Psoas muscle (tissue), 8 donors: ENCODE measurements at regions of chr11 and their contacts with region 1.

Region 1: DNA sequence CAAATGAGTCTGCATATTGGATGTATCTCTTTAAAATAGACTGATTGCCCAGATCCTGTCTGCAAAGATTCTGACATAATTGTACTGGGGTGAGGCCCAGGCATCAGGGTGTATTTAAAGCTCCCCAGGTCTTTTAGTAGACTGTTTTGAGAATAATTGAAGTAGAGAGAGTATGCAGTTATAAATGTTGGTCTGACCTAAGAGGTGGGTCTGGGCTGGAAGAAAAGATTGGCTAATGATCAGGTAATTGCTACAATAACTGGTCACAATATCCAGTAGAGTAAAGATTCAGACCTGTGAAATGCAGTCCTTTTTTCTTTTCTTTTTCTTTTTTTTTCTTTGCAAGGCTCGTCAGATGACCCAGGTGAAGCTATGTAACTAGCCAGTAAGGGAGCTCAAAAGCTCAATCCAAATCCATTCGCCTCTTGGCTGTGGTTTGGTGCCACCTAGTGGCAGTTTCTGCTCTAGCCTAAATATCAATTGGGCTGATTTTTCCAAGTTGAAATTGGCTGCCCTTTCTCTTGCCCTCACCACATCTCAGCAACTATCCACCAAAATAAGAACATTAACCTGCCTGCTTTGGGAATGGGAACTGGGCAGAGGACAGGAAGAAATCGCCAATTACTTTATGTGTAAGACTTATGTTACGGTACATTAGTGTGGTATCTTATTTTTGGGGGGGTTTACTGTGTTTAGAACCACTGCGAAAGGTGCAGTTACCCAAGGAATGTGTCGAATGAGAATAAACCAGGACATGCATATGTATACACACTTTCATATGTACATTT is 45.9 kb downstream of the ZNF143 start:
- DNase-seq: peak; percentile 56 to 71
- ATAC-seq: peak; percentile 75 to 90 (median 86)
- H3K4me3 ChIP-seq: no peak overlapping the region
- H3K27ac ChIP-seq: no peak overlapping the region
- H3K4me1 ChIP-seq: no peaks in the 10 kb centered on the region
- H3K27me3 ChIP-seq: no peaks in the 10 kb centered on the region
- CTCF ChIP-seq: peak; percentile 93

Region 2: GRCh38 chr11:9015677-9016076 is 491.0 kb before region 1 on chr11:
- intact Hi-C with region 1: loop called (anchors 2 to 10 kb)
- DNase-seq: peak; percentile 52 to 66
- ATAC-seq: peak; percentile 83 to 96 (median 92)
- H3K4me3 ChIP-seq: no peak overlapping the region
- H3K27ac ChIP-seq: no peak overlapping the region
- H3K4me1 ChIP-seq: no peaks in the 10 kb centered on the region
- H3K27me3 ChIP-seq: no peaks in the 10 kb centered on the region
- CTCF ChIP-seq: peak; percentile 75

Region 3: DNA sequence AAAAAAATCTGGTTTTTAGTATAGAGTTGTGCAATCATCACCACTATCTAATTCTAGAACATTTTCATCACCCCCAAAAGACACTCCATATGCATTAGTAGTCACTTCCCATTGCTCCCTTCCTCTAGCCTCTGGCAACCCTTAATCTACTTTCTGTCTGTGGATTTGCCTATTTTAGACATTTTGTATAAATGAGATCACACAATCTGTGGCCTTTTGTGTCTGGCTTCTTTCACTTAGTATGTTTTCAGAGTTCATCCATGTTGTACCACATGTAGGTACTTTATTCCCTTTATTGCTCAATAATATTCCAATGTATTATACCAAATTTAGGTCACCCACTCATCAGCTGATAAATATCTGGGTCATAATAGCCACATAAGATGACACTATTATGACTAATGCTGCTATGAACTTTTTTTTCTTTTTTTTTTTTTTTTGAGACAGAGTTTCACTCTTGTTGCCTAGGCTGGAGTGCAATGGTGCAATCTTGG is 347.7 kb before region 1 on chr11:
- intact Hi-C with region 1: loop called in 1 of 2 experiments (anchors 10 kb)
- DNase-seq: no peak
- ATAC-seq: peak; percentile 60 to 73 (median 66)
- H3K4me3 ChIP-seq: no peak overlapping the region
- H3K27ac ChIP-seq: no peak overlapping the region
- H3K4me1 ChIP-seq: no peaks in the 10 kb centered on the region
- H3K27me3 ChIP-seq: no peaks in the 10 kb centered on the region
- CTCF ChIP-seq: no peak

Region 4: DNA sequence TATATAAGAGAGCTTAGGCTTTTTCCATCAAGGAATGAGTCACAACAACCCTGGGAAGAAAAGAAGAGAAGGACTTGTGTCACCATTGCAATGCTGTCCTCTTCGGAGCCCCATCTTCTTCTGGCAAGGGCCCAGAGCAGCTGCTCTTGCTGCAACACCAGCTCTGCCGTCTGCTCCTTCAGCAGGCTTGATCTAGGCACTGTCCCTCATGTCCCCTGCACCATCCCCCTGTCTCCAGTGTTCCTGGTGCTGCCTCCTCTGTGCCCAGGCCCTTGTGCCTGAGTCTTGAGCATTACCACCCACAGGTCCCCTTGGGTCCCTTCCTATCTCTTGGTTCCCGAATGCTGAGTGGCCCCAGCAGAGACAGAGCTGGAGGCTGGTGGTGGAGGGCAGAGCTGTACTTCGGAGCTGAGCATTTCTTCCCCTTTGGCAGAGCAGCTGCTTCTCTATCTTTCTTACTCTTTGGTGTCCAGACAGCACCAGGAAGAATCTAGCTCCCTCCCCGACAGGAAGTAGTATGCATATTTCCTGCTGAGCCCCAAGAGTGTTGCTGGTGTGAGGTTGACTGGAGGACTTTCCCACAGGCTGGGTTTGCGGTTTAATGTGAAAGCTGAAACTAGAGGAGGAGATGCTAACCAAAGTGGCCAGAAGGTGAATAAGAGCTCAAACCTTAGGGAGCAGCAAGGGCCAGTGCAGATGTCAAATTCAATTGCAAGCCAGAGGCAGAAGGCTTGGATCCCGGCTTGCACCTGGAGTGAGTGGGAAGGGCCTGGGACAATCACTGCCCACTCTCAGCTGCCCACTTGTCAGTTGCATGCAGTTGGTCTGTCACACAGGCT is 94.6 kb after region 1 on chr11:
- intact Hi-C with region 1: no loop called
- DNase-seq: peak; percentile 44 to 74
- ATAC-seq: peak in 2 of 4 donors; percentile 35 to 50
- H3K4me3 ChIP-seq: no peak overlapping the region
- H3K27ac ChIP-seq: no peak overlapping the region
- H3K4me1 ChIP-seq: no peaks in the 10 kb centered on the region
- H3K27me3 ChIP-seq: no peaks in the 10 kb centered on the region
- CTCF ChIP-seq: no peak